Left ventricle myocardium superior (tissue), 1 donor: ENCODE measurements at regions of chr20 and their contacts with region 1.

Region 1: DNA sequence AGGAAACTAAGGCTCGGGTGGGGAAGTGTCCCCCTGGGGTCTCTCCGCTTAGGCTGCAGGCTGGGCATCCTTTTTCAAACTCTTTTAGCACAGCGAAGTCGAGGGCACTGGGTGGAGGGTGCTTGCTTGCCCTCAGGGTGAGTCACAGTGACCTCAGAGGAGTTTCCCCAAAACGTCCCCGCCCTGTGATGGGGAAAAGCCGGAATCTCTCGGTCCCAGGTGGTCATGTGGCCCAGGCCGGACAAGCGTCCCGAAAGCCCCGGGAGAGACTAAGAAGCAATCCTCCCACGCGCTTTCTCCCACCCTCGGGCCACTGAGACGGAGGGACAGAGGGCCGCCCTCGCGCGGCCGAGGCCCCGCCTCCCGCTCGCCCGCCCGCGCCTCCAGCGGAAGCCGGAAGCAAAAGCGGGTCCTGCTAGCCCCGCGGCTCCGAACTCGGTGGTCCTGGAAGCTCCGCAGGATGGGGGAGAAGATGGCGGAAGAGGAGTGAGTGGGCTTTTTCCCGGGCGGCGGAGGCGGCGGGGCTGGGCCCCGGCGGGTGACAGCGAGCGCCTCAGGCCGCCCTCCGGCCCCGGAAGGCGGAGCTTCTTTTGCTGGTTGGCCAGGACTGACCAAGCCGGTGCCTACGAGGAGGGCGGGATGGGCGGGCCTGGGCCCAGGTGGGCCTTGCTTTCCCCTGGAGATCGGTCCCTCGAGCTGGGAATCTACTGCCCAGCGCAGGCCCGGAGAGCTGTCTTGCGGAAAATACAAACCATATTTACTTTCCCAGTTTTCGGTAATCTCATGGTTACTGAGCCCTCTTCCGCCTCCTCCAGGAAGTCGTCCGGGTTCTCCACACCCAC is at the start of gene SLC9A8:
- DNase-seq: peak; percentile 92
- ATAC-seq: peak; percentile 97
- total RNA-seq, gene SLC9A8: 4.4 TPM

Region 2: DNA sequence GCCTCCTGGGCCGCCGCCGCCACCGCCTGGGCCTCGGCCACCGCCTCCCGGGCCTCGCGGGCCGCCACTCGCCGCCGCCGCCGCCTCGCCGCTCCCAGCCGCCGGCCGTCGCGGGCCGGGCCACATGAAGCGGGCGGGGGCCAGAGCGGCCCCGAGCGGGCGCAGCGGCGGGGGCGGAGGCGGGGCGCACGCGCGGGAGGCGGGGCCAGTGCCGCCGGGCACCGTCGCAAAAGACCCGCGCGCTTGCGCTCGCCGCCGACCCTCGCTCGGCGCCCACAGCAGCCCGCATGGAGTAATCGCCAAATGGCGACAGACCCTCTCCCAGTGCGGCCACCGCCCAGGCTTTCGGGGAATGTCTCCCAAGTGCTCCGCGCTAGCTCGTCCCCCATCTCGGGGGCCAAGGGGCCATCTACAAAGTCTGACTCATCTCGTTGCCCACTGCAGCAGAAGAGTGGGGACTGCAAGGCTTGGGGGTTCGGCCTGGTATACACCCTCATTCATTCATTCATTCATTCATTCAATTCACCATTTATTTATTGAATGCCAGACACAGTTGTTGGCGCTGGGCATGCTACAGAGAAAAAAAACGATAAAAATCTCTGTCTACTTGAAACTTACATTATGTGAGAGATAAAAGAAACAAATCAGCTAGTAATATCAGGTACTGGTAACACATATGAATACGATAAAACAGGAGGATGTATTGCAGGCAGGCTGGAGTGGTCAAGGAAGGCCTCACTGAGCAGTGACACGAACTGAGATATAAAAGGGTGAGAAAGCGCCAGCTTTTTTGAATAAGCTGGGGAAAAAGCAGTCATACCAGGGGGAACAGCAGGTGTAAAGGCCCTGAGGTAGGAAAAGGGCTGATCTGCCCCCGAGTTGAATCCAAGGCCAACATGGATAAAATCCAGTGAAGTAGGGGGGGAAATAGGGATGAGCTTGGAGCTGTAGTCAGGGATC is 98.7 kb before region 1 on chr20 and contains the start of gene B4GALT5:
- intact Hi-C with region 1: loop called (anchors 10 kb)
- DNase-seq: peak; percentile 82
- ATAC-seq: peak; percentile 91
- total RNA-seq, gene B4GALT5: 37.2 TPM

Region 3: GRCh38 chr20:50528804-50529351 is 716.2 kb after region 1 on chr20:
- intact Hi-C with region 1: no loop called
- DNase-seq: no peak
- ATAC-seq: peak; percentile 72